Sigmoid colon (tissue), 7 donors: ENCODE measurements at regions of chr6 and their contacts with region 1.

Region 1: GRCh38 chr6:157823001-157823527 is at the start of gene SNX9:
- DNase-seq: peak; percentile 90
- H3K4me3 ChIP-seq: peak within 1 kb of the TSS; percentile 82 to 98 (median 92)
- H3K27ac ChIP-seq: peak within 1 kb of the TSS; percentile 98 to 99 (median 98)
- H3K4me1 ChIP-seq: peaks cover 0 to 24% (median 22%) of the 10 kb centered on the region in 4 donors
- H3K27me3 ChIP-seq: no peaks in the 10 kb centered on the region
- CTCF ChIP-seq: no peak
- EP300 ChIP-seq: no peak
- POLR2A ChIP-seq: no peak
- total RNA-seq, gene SNX9: 48.5 to 68.1 (median 63.1) TPM

Region 2: GRCh38 chr6:157682931-157683403 is 140.1 kb before region 1 on chr6:
- intact Hi-C with region 1: no loop called
- DNase-seq: no peak
- H3K4me3 ChIP-seq: no peak overlapping the region
- H3K27ac ChIP-seq: peak overlapping the region in 1 of 4 donors; percentile 27
- H3K4me1 ChIP-seq: no peaks in the 10 kb centered on the region
- H3K27me3 ChIP-seq: no peaks in the 10 kb centered on the region
- CTCF ChIP-seq: no peak
- EP300 ChIP-seq: no peak
- POLR2A ChIP-seq: no peak

Region 3: DNA sequence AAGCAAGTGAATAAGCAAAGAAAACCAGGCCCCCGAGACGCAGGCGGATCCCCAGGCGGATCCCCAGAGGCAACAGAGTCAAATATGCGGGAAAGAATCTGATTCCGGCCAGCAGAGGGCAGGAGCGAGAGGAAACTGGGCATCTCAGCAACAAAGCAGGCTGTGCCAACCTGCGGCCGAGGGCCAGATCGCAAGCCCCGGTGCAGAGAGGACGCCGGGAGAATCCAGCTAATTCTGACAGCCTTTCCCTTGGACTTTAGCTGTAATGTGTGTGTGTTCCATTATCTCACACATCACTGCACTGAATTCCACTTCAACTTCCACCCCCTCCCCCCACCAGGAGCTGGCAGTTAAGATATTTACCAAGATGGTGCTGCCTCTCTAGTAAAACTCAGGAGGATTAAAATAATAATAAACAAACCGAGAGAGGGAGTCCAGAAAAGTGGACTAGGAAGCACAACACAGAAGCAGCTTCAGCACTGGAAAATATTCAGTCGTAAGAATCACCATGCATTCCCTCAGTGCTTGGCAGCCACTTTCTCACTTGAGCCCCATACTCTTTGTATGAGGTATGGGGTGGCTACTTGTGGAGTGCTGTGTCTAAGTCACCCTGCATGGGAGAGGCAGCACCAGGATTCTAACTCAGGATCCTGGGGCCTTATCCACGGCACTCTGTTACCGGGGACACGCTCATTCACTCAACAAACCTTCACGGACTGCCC is 66.2 kb before region 1 on chr6:
- intact Hi-C with region 1: loop called (anchors 2 kb)
- DNase-seq: peak; percentile 93
- H3K4me3 ChIP-seq: peak overlapping the region in 3 of 4 donors; percentile 12 to 16 (median 13)
- H3K27ac ChIP-seq: peak overlapping the region; percentile 39 to 73 (median 63)
- H3K4me1 ChIP-seq: peaks cover 0 to 31% (median 23%) of the 10 kb centered on the region in 4 donors
- H3K27me3 ChIP-seq: no peaks in the 10 kb centered on the region
- CTCF ChIP-seq: peak; percentile 81 to 85 (median 82)
- EP300 ChIP-seq: no peak
- POLR2A ChIP-seq: no peak

Region 4: DNA sequence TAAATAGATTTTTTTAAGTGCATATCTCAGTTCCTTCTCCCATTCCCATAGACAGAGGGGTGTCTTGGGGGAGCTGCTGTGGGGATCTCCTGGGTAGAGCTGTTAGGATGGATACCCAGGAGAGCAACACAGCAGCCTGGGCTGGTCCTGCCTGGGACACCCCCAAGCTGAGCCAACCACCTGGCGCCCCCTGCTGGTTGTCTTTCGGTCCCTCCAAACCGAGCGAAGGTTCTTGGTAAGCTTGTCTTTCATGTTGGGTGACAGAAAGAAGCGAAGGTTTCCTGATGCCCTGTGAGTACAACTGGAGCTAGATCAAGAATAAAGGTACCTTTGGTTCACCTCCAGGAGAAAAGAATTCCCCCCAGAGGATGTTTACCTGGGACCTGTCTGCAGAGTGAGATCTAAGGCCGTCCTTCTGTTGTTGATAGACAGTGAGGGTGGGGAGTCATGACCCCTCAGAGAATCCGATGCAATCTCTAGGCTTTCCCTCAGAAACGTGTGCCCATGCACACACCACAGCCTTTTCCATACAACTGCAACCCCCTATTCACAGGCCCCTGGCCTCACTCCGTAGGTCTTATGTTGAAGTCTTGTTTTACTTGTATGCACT is 50.8 kb after region 1 on chr6:
- intact Hi-C with region 1: loop called (anchors 5 kb)
- DNase-seq: peak; percentile 88
- H3K4me3 ChIP-seq: no peak overlapping the region
- H3K27ac ChIP-seq: no peak overlapping the region
- H3K4me1 ChIP-seq: no peaks in the 10 kb centered on the region
- H3K27me3 ChIP-seq: no peaks in the 10 kb centered on the region
- CTCF ChIP-seq: peak; percentile 54 to 80 (median 72)
- EP300 ChIP-seq: no peak
- POLR2A ChIP-seq: no peak

Region 5: GRCh38 chr6:158072083-158072721 is 249.1 kb after region 1 on chr6:
- intact Hi-C with region 1: loop called (anchors 5 kb)
- DNase-seq: peak; percentile 87
- H3K4me3 ChIP-seq: no peak overlapping the region
- H3K27ac ChIP-seq: peak overlapping the region in 1 of 4 donors; percentile 26
- H3K4me1 ChIP-seq: peaks cover 0 to 7% (median 0%) of the 10 kb centered on the region in 4 donors
- H3K27me3 ChIP-seq: no peaks in the 10 kb centered on the region
- CTCF ChIP-seq: peak; percentile 76 to 81 (median 80)
- EP300 ChIP-seq: no peak
- POLR2A ChIP-seq: no peak